T-cell (primary cell): ENCODE measurements at regions of chr4 and their contacts with region 1.

Region 1: GRCh38 chr4:74189331-74190043 is 31.6 kb downstream of the MTHFD2L start:
- DNase-seq: peak in 3 of 35 experiments; percentile 2 to 68 (median 11)
- ATAC-seq: peak in 1 of 4 experiments; percentile 52
- H3K4me3 ChIP-seq: no peak overlapping the region
- H3K4me3 Mint-ChIP-seq: no peak overlapping the region
- H3K27ac ChIP-seq: no peak overlapping the region
- H3K27ac Mint-ChIP-seq: no peak overlapping the region
- H3K4me1 ChIP-seq: no peaks in the 10 kb centered on the region
- H3K4me1 Mint-ChIP-seq: no peaks in the 10 kb centered on the region
- H3K27me3 ChIP-seq: no peaks in the 10 kb centered on the region
- H3K27me3 Mint-ChIP-seq: no peaks in the 10 kb centered on the region

Region 2: GRCh38 chr4:74018771-74019170 is 170.7 kb before region 1 on chr4:
- CTCF ChIA-PET with region 1: no interaction called
- POLR2A ChIA-PET with region 1: no interaction called
- DNase-seq: no peak
- ATAC-seq: no peak
- H3K4me3 ChIP-seq: no peak overlapping the region
- H3K4me3 Mint-ChIP-seq: no peak overlapping the region
- H3K27ac ChIP-seq: no peak overlapping the region
- H3K27ac Mint-ChIP-seq: no peak overlapping the region
- H3K4me1 ChIP-seq: peaks cover 0 to 13% of the 10 kb centered on the region in 2 experiments
- H3K4me1 Mint-ChIP-seq: peaks cover 0 to 7% (median 3%) of the 10 kb centered on the region in 3 donors
- H3K27me3 ChIP-seq: no peaks in the 10 kb centered on the region
- H3K27me3 Mint-ChIP-seq: no peaks in the 10 kb centered on the region

Region 3: DNA sequence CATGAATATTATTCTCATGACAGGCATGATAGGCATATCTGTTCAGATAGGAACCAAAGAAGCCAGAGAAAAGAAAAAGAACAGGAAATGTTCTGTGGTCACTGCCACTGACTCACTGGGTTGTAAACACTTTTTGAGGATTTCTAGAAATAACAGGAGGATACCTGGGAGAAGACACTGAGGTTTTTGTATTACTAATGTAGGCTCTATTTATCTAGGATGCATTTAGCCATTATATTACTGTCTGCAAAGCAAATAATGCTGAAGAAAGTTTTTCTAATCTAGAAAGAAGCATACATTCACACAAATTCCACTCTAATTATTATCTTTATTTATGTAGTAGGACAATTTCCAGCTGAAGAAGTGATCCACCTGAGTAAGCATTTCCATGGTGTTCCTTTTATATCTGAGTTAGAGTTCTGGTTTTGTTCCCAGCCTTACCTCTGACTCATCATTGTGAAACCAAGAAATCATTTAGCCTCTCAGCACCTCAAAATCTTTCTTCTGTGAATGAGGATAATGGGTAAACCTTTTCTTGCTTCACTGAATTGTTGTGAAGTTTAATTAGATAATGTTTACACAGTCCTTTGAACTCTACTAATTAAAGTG is 78.6 kb after region 1 on chr4:
- CTCF ChIA-PET with region 1: interaction called in 1 of 2 experiments, 11 read pairs
- POLR2A ChIA-PET with region 1: no interaction called
- DNase-seq: no peak
- ATAC-seq: no peak
- H3K4me3 ChIP-seq: no peak overlapping the region
- H3K4me3 Mint-ChIP-seq: no peak overlapping the region
- H3K27ac ChIP-seq: no peak overlapping the region
- H3K27ac Mint-ChIP-seq: no peak overlapping the region
- H3K4me1 ChIP-seq: no peaks in the 10 kb centered on the region
- H3K4me1 Mint-ChIP-seq: peaks cover 0 to 4% (median 3%) of the 10 kb centered on the region in 3 donors
- H3K27me3 ChIP-seq: no peaks in the 10 kb centered on the region
- H3K27me3 Mint-ChIP-seq: no peaks in the 10 kb centered on the region

Region 4: DNA sequence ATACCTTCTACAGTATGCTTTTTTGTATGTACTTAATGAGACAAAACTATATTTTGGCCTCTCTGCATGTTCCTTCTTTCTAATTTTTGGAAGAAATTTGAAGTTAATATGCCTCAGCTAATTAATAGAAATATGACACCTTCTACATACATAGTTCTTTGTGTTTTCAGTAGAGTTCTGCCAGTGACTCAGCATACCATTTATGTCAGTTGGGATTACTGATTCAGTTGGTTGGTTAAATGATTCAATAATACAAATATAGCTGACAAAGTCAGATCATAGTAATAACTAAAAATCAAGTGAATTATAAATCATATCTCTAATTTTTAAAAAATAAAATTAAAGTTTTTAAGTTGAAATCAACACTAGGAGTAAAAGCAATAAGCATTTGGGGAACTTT is 588.0 kb after region 1 on chr4:
- CTCF ChIA-PET with region 1: no interaction called
- POLR2A ChIA-PET with region 1: no interaction called
- DNase-seq: no peak
- ATAC-seq: no peak
- H3K4me3 ChIP-seq: no peak overlapping the region
- H3K4me3 Mint-ChIP-seq: no peak overlapping the region
- H3K27ac ChIP-seq: no peak overlapping the region
- H3K27ac Mint-ChIP-seq: no peak overlapping the region
- H3K4me1 ChIP-seq: no peaks in the 10 kb centered on the region
- H3K4me1 Mint-ChIP-seq: no peaks in the 10 kb centered on the region
- H3K27me3 ChIP-seq: no peaks in the 10 kb centered on the region
- H3K27me3 Mint-ChIP-seq: no peaks in the 10 kb centered on the region